Mammary epithelial cell (primary cell): ENCODE measurements at regions of chr9 and their contacts with region 1.

Region 1: DNA sequence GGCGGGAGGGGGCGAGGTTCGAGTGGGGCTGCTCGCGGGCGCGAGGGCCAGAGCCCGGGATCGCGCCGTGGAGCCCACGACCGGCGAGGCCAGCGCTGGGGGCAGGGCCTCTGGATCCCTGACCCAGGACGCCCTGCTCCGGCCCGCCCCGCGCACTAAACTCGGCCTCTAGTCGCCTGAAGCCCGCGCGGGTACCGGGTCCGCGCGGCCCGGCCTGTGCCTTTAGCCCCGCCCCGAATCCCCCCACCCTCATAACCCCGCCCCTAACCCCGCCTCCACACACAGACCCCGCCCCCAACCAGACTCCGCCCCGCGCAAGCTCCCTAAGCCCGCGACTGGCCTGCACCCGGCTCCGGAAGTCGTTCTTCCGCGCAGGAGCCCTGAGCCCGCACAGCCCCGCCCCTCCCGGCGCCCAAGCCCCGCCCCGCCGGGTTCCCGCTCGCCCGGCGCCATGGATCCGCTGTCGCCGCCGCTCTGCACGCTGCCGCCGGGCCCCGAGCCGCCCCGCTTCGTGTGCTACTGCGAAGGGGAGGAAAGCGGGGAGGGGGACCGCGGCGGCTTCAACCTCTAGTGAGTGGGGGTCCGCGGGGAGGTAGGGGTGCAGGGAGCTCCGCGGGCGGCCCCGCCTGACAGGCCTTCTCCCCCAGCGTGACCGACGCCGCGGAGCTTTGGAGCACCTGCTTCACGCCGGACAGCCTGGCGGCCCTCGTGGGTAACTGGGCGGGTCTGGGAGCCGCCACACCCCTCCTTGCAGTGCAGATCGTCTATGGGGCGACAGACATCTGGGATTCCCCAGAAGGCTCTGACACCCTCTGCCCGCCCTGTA is at the start of gene PAXX:
- DNase-seq: peak; percentile 82
- H3K4me3 ChIP-seq: peak within 1 kb of the TSS; percentile 72 to 81 (median 77)
- H3K27ac ChIP-seq: peak within 1 kb of the TSS; percentile 66
- H3K4me1 ChIP-seq: peaks cover 26% of the 10 kb centered on the region
- H3K27me3 ChIP-seq: no peaks in the 10 kb centered on the region
- CTCF ChIP-seq: no peak
- total RNA-seq, gene PAXX: 6.8 to 35.2 TPM

Region 2: GRCh38 chr9:137021979-137022619 is 29.9 kb after region 1 on chr9:
- CTCF ChIA-PET with region 1: no interaction called
- dilution Hi-C with region 1: no loop called
- in situ Hi-C with region 1: no loop called
- intact Hi-C with region 1: loop called (anchors 2 kb)
- DNase-seq: peak; percentile 73
- H3K4me3 ChIP-seq: no peak overlapping the region
- H3K27ac ChIP-seq: no peak overlapping the region
- H3K4me1 ChIP-seq: peaks cover 20% of the 10 kb centered on the region
- H3K27me3 ChIP-seq: no peaks in the 10 kb centered on the region
- CTCF ChIP-seq: no peak